MCF 10A (cell line): ENCODE measurements at regions of chr12 and their contacts with region 1.

Region 1: DNA sequence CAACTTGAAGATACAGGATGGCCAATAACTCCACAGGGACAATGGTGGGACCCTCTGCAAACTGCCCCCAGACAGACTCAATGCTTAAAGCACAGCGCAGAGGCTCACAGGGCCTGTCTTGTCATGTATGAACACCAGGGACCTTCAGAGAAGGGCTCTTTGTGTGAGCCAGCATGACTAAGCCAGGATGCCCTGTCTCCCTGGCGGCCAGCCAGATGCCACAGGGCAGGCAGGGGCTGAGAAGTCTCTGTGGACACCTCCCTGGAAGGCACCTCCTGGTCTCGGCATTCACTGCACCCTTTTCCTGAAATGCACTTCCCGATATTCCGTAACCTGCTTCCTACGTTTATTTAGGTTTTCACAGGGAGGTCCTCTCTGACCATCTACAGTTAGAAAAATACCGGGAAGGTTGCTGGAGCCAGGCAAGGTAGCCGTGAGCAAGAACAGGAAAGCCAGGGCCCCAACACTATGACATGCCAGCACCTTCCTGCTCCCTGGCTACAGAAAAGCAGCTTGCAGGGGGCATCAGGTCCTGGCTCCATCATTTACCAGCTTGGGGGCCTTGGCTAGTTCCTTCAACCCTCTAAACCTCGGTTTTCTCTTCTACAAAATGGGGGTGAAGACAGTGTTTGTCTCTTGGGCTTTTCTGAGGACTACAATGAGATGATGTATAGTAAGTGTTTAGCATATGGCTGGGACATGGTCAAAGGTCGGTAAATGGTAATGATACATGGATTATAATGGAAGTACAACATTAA is 65.0 kb downstream of the PITPNM2 start:
- DNase-seq: peak; percentile 95
- H3K4me3 Mint-ChIP-seq: no peak overlapping the region
- H3K27ac Mint-ChIP-seq: no peak overlapping the region
- H3K4me1 Mint-ChIP-seq: peaks cover 41% of the 10 kb centered on the region
- H3K27me3 Mint-ChIP-seq: no peaks in the 10 kb centered on the region
- CTCF ChIP-seq: no peak

Region 2: GRCh38 chr12:123126186-123127006 is 40.5 kb after region 1 on chr12:
- CTCF ChIA-PET with region 1: interaction called, 3 read pairs
- POLR2A ChIA-PET with region 1: interaction called, 4 read pairs
- intact Hi-C with region 1: loop called (anchors 5 kb)
- DNase-seq: peak; percentile 92
- H3K4me3 Mint-ChIP-seq: no peak overlapping the region
- H3K27ac Mint-ChIP-seq: peak overlapping the region; percentile 78
- H3K4me1 Mint-ChIP-seq: peaks cover 10% of the 10 kb centered on the region
- H3K27me3 Mint-ChIP-seq: no peaks in the 10 kb centered on the region
- CTCF ChIP-seq: no peak

Region 3: DNA sequence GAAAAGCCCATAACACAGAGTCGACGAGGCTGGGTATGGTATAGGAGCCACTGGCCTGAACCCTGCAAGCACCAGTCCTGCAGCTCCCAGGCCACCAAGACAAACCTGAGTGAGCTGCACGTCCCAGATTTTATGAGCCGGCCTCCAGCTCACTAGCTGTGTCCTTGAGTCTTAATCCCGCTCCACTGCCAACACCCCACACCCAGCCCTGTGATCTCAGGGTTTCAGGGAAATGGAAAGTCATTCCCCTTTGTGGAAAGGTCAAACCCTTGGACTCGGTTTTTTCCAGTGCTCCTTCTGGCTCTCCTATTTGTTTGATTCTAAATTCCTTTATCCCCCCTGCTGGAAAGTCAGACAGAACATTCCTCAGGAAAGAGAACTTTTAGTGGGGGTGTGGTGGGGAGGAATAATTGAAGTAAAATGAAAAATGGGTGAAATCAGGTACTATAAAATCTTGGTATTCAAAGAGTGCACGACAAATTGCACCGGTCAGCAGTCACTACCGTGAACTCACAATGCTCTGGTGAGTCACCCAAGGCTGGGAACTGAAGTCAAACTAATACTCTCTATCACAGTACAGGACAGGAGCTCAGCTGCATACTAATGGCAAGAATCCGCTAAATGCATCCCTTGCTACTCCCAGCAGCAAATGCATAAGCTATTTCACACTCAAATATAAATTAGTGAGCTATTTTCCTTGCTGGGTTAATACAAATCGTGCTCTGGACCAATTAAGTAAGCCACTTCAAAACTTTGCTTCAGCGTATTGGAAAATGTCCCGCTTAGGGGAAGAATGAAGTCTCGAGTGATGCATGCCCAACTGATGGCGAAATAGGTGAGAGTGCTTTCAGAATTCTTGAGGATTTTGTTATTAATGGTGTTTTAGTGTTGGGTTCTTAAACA is 56.0 kb after region 1 on chr12:
- CTCF ChIA-PET with region 1: no interaction called
- POLR2A ChIA-PET with region 1: interaction called, 3 read pairs
- intact Hi-C with region 1: loop called (anchors 5 kb)
- DNase-seq: peak; percentile 76
- H3K4me3 Mint-ChIP-seq: peak overlapping the region; percentile 46
- H3K27ac Mint-ChIP-seq: no peak overlapping the region
- H3K4me1 Mint-ChIP-seq: peaks cover 21% of the 10 kb centered on the region
- H3K27me3 Mint-ChIP-seq: no peaks in the 10 kb centered on the region
- CTCF ChIP-seq: no peak